ENCODE measurements at regions of chr10 and their contacts with region 1.

Region 1: GRCh38 chr10:132412326-132413192 is 15.6 kb downstream of the PWWP2B start:
- DNase-seq: no peak
- H3K4me3 ChIP-seq: no peak overlapping the region
- H3K27ac ChIP-seq: peak overlapping the region; percentile 67
- H3K4me1 ChIP-seq: peaks cover 37% of the 10 kb centered on the region
- H3K27me3 ChIP-seq: no peaks in the 10 kb centered on the region
- CTCF ChIP-seq: no peak

Region 2: GRCh38 chr10:132434405-132435005 is 21.9 kb after region 1 on chr10:
- CTCF ChIA-PET with region 1: interaction called, 12 read pairs
- POLR2A ChIA-PET with region 1: no interaction called
- intact Hi-C with region 1: no loop called
- DNase-seq: peak; percentile 63
- H3K4me3 ChIP-seq: no peak overlapping the region
- H3K27ac ChIP-seq: no peak overlapping the region
- H3K4me1 ChIP-seq: no peaks in the 10 kb centered on the region
- H3K27me3 ChIP-seq: no peaks in the 10 kb centered on the region
- CTCF ChIP-seq: no peak

Region 3: GRCh38 chr10:132551093-132551807 is 138.7 kb after region 1 on chr10:
- CTCF ChIA-PET with region 1: no interaction called
- POLR2A ChIA-PET with region 1: no interaction called
- intact Hi-C with region 1: no loop called
- DNase-seq: no peak
- H3K4me3 ChIP-seq: no peak overlapping the region
- H3K27ac ChIP-seq: no peak overlapping the region
- H3K4me1 ChIP-seq: peaks cover 11% of the 10 kb centered on the region
- H3K27me3 ChIP-seq: no peaks in the 10 kb centered on the region
- CTCF ChIP-seq: no peak